ENCODE measurements at regions of chr3 and their contacts with region 1.

Region 1: GRCh38 chr3:56915966-56916586 is 114.3 kb upstream of the ARHGEF3 start:
- DNase-seq: peak; percentile 87
- ATAC-seq: peak; percentile 86
- H3K4me3 Mint-ChIP-seq: peak overlapping the region; percentile 73
- H3K27ac Mint-ChIP-seq: peak overlapping the region; percentile 79
- H3K4me1 Mint-ChIP-seq: peaks cover 68% of the 10 kb centered on the region
- H3K27me3 Mint-ChIP-seq: no peaks in the 10 kb centered on the region

Region 2: DNA sequence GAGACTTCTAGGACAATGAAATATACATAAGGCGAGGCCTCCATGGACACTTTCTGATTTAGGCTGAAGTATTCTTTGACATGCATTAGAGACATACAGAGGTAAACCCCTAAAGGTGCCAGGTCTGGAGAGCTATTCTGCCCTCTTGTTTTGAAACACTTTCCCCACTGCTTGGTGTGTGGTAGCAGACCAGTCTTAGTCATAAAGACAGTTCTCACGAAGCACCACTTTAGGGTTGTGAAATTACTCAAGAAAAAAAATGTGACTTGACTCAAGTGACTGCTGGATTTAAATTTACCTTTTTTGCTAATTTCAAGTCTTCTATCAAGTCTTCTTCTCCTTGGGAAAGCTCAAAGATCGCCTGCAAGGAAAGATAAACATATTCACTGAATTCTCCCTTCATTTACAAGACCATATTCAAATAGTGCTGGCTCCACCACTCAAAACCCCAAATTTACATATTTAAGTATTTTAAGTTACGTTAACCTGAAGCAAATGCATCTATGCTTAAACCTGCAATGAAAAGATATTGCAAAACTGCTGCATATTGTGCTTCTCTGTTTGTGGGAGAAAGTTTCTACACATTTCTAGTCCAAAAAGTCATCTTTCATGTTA is 162.8 kb before region 1 on chr3:
- CTCF ChIA-PET with region 1: interaction called, 4 read pairs
- POLR2A ChIA-PET with region 1: no interaction called
- intact Hi-C with region 1: loop called in 1 of 2 experiments (anchors 1 kb)
- DNase-seq: peak; percentile 66
- ATAC-seq: peak; percentile 98
- H3K4me3 Mint-ChIP-seq: peak overlapping the region; percentile 21
- H3K27ac Mint-ChIP-seq: peak overlapping the region; percentile 70
- H3K4me1 Mint-ChIP-seq: peaks cover 59% of the 10 kb centered on the region
- H3K27me3 Mint-ChIP-seq: no peaks in the 10 kb centered on the region

Region 3: GRCh38 chr3:56855856-56856512 is 60.1 kb before region 1 on chr3:
- CTCF ChIA-PET with region 1: no interaction called
- POLR2A ChIA-PET with region 1: no interaction called
- intact Hi-C with region 1: no loop called
- DNase-seq: peak; percentile 68
- ATAC-seq: peak; percentile 53
- H3K4me3 Mint-ChIP-seq: no peak overlapping the region
- H3K27ac Mint-ChIP-seq: no peak overlapping the region
- H3K4me1 Mint-ChIP-seq: peaks cover 52% of the 10 kb centered on the region
- H3K27me3 Mint-ChIP-seq: no peaks in the 10 kb centered on the region

Region 4: GRCh38 chr3:56878074-56878473 is 38.0 kb before region 1 on chr3:
- CTCF ChIA-PET with region 1: interaction called, 7 read pairs
- POLR2A ChIA-PET with region 1: interaction called, 3 read pairs
- intact Hi-C with region 1: loop called (anchors 1 to 2 kb)
- DNase-seq: peak; percentile 79
- ATAC-seq: peak; percentile 87
- H3K4me3 Mint-ChIP-seq: peak overlapping the region; percentile 64
- H3K27ac Mint-ChIP-seq: peak overlapping the region; percentile 94
- H3K4me1 Mint-ChIP-seq: peaks cover 90% of the 10 kb centered on the region
- H3K27me3 Mint-ChIP-seq: no peaks in the 10 kb centered on the region

Region 5: DNA sequence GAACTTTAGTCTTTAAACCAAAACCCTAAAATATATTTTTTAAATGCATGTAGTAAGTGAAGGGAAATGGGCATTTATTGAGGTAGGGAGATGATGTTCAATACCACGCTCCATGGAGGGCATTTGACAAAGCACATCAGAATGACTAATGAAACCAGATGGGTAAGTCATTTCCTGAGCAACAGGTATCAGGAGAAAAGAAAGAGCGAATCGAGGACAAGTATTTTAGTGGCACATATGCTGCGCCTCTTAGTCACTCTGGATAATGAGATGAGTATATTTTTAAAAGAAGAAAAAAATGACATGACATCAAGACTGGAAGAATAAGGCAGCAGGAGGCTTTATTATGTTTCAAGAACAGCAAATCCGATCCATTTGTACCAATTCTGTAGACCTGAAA is 14.6 kb after region 1 on chr3:
- CTCF ChIA-PET with region 1: interaction called, 3 read pairs
- POLR2A ChIA-PET with region 1: no interaction called
- intact Hi-C with region 1: loop called (anchors 1 to 2 kb)
- DNase-seq: peak; percentile 42
- ATAC-seq: peak; percentile 98
- H3K4me3 Mint-ChIP-seq: peak overlapping the region; percentile 21
- H3K27ac Mint-ChIP-seq: peak overlapping the region; percentile 86
- H3K4me1 Mint-ChIP-seq: peaks cover 73% of the 10 kb centered on the region
- H3K27me3 Mint-ChIP-seq: no peaks in the 10 kb centered on the region

Region 6: DNA sequence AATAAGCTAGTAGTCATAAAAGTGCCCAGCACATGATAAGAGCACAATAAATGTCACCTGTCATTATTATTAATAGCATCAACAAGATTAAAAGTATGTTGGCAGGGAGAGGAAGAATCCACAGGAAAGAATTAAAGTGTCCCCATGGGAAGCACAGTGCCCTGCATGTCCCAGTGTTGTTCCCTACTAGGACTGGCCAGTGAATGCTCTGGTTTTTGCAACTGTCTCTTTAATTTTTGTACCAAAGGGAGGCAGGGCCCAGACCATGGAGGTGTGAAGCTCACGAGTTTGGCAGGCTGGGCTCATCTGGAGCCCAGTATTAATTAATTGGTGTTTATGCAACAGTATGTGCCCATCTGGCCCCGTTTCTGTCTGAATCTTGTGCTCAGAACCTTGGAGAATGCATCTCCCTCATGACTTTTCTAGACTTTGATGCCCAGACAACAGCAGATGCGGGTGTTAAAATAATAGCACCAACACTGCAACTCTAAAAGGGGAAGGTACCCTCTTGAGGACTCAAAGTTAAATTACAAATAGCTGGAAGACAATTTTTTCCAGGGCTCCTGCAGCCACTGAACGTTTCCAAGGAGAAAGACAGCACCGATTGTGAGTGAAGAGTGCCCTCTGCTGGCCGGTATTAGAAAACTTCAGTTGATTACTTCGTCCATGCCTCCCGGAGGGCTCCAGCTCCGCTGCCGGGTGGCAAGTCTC is 72.5 kb after region 1 on chr3:
- CTCF ChIA-PET with region 1: interaction called, 19 read pairs
- POLR2A ChIA-PET with region 1: no interaction called
- intact Hi-C with region 1: loop called in 1 of 2 experiments (anchors 2 kb)
- DNase-seq: peak; percentile 84
- ATAC-seq: peak; percentile 72
- H3K4me3 Mint-ChIP-seq: no peak overlapping the region
- H3K27ac Mint-ChIP-seq: no peak overlapping the region
- H3K4me1 Mint-ChIP-seq: peaks cover 23% of the 10 kb centered on the region
- H3K27me3 Mint-ChIP-seq: peaks cover 12% of the 10 kb centered on the region

Region 7: GRCh38 chr3:57078344-57078634 is 162.2 kb after region 1 on chr3:
- CTCF ChIA-PET with region 1: no interaction called
- POLR2A ChIA-PET with region 1: no interaction called
- intact Hi-C with region 1: no loop called
- DNase-seq: peak; percentile 43
- ATAC-seq: peak; percentile 49
- H3K4me3 Mint-ChIP-seq: peak overlapping the region; percentile 36
- H3K27ac Mint-ChIP-seq: no peak overlapping the region
- H3K4me1 Mint-ChIP-seq: no peaks in the 10 kb centered on the region
- H3K27me3 Mint-ChIP-seq: peaks cover 50% of the 10 kb centered on the region

Measured in activated CD4-positive, alpha-beta T cell treated with anti-CD3 and anti-CD28 coated beads for 36 hours (primary cell).